ENCODE measurements at regions of chr4 and their contacts with region 1.

Region 1: DNA sequence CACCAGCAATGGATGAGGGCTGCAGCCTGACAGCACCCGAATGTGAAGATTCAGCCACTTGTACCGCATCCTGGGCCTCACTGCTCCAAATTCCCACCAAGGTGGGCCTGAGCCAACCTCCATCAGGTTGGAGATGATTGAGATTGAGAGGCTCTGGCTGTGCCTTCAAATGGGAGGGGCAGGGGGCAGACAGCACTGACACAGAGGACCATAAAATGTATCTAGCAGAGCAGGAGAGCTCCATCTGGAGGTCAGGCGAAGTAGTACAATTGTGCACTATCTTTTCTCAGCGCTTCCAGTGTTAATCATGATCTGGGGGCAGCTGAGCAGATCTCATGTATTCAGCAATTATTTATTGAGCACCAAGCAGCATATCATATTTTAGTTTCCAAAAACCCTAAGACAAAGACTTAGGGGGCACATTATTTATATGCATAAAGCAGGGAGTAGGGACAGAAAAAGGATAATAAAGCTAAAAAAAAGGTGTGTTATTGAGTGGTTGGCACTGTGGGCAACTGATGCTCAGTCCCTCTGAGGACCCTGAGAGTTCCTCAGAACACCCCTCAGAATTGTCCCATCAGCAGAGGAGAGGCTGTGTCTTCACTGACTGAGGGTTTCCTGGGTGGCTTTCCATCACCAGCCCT is 31.6 kb upstream of the C1QTNF7 start:
- DNase-seq: no peak
- H3K4me3 ChIP-seq: no peak overlapping the region
- H3K27ac ChIP-seq: no peak overlapping the region
- H3K27me3 ChIP-seq: no peaks in the 10 kb centered on the region
- CTCF ChIP-seq: peak; percentile 68

Region 2: GRCh38 chr4:15231265-15232091 is 164.8 kb before region 1 on chr4:
- CTCF ChIA-PET with region 1: interaction called, 20 read pairs
- POLR2A ChIA-PET with region 1: no interaction called
- DNase-seq: peak; percentile 79
- H3K4me3 ChIP-seq: no peak overlapping the region
- H3K27ac ChIP-seq: peak overlapping the region; percentile 47
- H3K27me3 ChIP-seq: no peaks in the 10 kb centered on the region
- CTCF ChIP-seq: peak; percentile 81

Region 3: DNA sequence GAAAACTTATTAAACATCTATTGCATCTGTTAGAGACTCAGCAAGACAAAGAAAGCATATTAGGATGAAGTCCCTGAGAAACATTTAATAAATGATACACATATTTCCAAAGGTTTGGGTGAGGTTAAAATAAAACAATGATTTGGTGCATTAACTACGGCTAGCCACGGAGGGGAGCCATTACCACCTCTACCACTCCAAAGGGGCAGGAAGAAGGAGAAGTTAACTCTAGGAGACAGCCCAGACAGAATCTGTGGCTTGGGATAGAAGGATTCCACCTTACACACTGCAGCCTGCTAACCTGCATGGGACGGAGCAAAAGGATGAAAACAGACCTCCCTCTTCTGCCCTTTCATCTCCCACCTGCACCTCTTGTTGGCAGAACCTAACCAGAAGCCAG is 157.6 kb before region 1 on chr4:
- CTCF ChIA-PET with region 1: interaction called, 20 read pairs
- POLR2A ChIA-PET with region 1: no interaction called
- DNase-seq: no peak
- H3K4me3 ChIP-seq: no peak overlapping the region
- H3K27ac ChIP-seq: no peak overlapping the region
- H3K27me3 ChIP-seq: no peaks in the 10 kb centered on the region
- CTCF ChIP-seq: peak; percentile 80

Region 4: DNA sequence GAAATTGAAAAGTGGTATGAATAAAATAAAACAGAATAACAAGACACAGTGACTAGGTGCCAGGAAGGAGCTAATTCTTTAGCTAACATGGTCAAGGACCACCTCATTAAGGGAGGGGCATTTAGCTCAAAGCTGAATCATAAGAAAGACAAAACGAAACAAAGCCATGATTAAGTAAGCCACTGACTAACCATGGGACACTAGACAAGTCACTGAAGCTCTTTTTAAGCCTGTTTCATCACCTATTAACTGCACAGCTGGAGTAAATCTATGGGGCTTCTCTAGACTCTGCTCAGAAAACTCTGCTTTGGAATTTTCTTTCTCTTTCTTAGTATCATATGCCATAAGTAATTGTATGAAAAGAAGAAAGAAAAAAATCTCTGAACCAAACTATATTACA is 18.2 kb before region 1 on chr4:
- CTCF ChIA-PET with region 1: interaction called, 14 read pairs
- POLR2A ChIA-PET with region 1: no interaction called
- DNase-seq: no peak
- H3K4me3 ChIP-seq: no peak overlapping the region
- H3K27ac ChIP-seq: no peak overlapping the region
- H3K27me3 ChIP-seq: no peaks in the 10 kb centered on the region
- CTCF ChIP-seq: no peak

Region 5: DNA sequence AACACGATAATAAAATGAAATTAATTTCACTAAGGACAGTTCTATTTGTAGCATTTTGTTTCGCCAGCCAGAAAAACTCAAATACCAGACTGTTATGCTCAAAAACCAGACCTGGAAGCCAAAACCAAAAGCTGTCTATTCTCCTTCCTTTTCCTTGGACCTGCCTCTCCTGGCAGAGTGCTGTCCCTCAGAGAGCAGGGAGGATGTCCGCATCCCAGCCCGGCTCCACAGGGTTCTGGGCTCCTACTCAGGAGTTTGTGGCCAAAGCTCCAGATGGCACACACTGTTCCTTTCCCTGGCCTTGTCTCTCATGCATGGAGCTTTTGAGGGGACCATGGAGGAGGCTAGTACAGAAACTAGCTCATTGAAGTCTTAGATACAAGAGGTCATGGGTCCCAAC is 10.4 kb before region 1 on chr4:
- CTCF ChIA-PET with region 1: interaction called, 18 read pairs
- POLR2A ChIA-PET with region 1: no interaction called
- DNase-seq: no peak
- H3K4me3 ChIP-seq: no peak overlapping the region
- H3K27ac ChIP-seq: no peak overlapping the region
- H3K27me3 ChIP-seq: peaks cover 2% of the 10 kb centered on the region
- CTCF ChIP-seq: no peak

Region 6: DNA sequence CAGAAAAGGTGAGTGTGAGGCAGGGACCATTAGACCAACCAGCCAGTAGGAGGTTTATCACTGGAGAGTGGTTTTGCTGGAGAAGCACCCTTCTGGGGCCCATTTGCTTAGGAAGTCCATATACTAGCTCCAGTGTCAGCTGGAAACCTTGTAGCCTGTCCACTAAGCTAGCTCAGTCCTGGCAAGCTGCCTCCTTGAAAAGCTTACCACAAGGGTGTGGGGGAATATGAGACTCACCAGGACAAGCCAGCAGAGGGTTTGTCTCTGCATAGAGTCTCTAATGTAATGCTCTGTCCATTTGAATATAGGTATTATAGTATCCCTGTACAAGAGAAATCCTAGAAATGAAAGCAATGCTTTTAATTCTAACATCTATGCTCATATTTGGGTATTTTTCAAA is 172.5 kb after region 1 on chr4:
- CTCF ChIA-PET with region 1: no interaction called
- POLR2A ChIA-PET with region 1: no interaction called
- DNase-seq: no peak
- H3K4me3 ChIP-seq: no peak overlapping the region
- H3K27ac ChIP-seq: no peak overlapping the region
- H3K27me3 ChIP-seq: no peaks in the 10 kb centered on the region
- CTCF ChIP-seq: no peak

Region 7: GRCh38 chr4:15832523-15833451 is 436.5 kb after region 1 on chr4:
- CTCF ChIA-PET with region 1: no interaction called
- POLR2A ChIA-PET with region 1: no interaction called
- DNase-seq: no peak
- H3K4me3 ChIP-seq: no peak overlapping the region
- H3K27ac ChIP-seq: no peak overlapping the region
- H3K27me3 ChIP-seq: no peaks in the 10 kb centered on the region
- CTCF ChIP-seq: no peak

Measured in AG04450 (cell line).